Testis (tissue), 5 donors: ENCODE measurements at regions of chr17 and their contacts with region 1.

Region 1: GRCh38 chr17:44324571-44325275 is at the start of gene SLC25A39:
- DNase-seq: peak; percentile 94
- H3K4me3 ChIP-seq: peak within 1 kb of the TSS; percentile 94 to 99
- H3K27ac ChIP-seq: peak within 1 kb of the TSS; percentile 88 to 95
- H3K4me1 ChIP-seq: peaks cover 12% of the 10 kb centered on the region
- H3K27me3 ChIP-seq: no peaks in the 10 kb centered on the region
- CTCF ChIP-seq: peak in 2 of 3 experiments; percentile 14 to 27
- POLR2A ChIP-seq: no peak
- total RNA-seq, gene SLC25A39: 131 to 176 TPM

Region 2: GRCh38 chr17:44219616-44220212 is 105.0 kb before region 1 on chr17 and contains the start of gene UBTF:
- intact Hi-C with region 1: loop called (anchors 5 kb)
- DNase-seq: peak; percentile 60
- H3K4me3 ChIP-seq: peak within 1 kb of the TSS; percentile 78 to 93
- H3K27ac ChIP-seq: peak within 1 kb of the TSS; percentile 96 to 99
- H3K4me1 ChIP-seq: peaks cover 31% of the 10 kb centered on the region
- H3K27me3 ChIP-seq: no peaks in the 10 kb centered on the region
- CTCF ChIP-seq: no peak
- POLR2A ChIP-seq: no peak
- total RNA-seq, gene UBTF: 69.6 to 78.7 TPM

Region 3: DNA sequence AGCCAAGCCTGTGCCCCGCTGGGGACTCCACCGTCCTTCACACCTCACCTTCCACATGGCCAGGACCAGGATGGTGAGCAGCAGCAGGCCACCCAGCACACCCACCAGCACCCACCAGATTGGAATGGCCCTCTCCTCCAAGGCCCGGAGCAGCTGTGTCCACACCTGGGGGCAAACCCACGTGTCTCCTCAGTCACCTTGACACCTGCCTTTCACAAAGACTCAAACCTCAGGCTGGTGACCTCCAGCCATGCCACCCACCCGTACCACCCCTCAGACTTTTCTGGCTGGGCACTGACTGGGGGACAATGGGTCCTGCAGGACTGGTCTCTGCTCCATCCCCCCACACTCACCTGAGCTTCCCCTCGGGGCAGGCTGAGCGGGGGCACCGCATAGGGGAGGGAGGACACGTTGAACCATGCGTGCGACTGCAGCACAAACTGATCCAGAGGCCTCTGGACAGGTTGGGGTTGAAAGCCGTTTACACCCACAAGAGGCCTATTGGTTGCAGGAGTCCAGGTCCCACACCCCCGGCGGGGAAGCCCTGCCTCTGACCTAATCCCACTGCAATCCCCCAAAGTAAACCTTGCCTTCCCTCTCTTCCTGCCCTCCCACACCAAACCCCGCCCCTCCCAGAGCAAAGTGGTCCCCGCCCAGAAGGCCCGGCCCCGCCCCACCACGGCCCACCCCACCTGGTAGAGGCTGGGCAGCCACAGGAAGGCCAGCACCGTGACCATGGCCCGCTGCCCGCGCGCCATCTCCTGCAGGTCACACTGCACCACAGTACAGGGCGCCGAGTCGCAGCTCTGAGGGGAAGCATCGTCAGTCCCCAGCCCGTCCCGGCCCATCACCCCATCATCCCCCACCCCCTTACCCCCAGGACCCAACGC is 49.8 kb after region 1 on chr17:
- intact Hi-C with region 1: no loop called
- DNase-seq: no peak
- H3K4me3 ChIP-seq: no peak overlapping the region
- H3K27ac ChIP-seq: no peak overlapping the region
- H3K4me1 ChIP-seq: peaks cover 15% of the 10 kb centered on the region
- H3K27me3 ChIP-seq: no peaks in the 10 kb centered on the region
- CTCF ChIP-seq: no peak
- POLR2A ChIP-seq: no peak